GM12878 (cell line): ENCODE measurements at regions of chr7 and their contacts with region 1.

Region 1: DNA sequence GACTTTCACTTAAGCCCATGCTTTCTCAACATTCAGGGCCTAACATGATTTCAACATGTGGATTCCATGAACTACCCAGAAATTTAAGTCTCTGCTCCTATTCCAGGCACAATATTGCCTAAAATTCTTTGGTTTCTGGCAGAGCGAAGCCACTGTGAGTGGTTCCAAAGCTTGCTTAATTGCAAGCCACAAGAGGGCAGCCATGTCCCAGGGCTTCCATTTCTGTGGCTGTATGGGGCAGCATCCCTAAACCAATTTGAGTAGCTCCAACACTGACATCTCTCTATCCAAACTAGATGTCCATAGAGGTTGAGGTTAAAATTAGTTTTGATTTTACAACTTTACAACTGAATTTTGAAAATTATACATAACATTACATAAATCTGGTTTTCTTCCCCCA is 56.3 kb upstream of the MDFIC start:
- DNase-seq: peak; percentile 25
- ATAC-seq: peak; percentile 99
- H3K4me3 ChIP-seq: no peak overlapping the region
- H3K27ac ChIP-seq: no peak overlapping the region
- H3K4me1 ChIP-seq: no peaks in the 10 kb centered on the region
- H3K27me3 ChIP-seq: no peaks in the 10 kb centered on the region
- CTCF ChIP-seq: peak; percentile 78 to 88 (median 79)
- EP300 ChIP-seq: no peak
- POLR2A ChIP-seq: no peak
- RAD21 ChIP-seq: peak; percentile 98

Region 2: DNA sequence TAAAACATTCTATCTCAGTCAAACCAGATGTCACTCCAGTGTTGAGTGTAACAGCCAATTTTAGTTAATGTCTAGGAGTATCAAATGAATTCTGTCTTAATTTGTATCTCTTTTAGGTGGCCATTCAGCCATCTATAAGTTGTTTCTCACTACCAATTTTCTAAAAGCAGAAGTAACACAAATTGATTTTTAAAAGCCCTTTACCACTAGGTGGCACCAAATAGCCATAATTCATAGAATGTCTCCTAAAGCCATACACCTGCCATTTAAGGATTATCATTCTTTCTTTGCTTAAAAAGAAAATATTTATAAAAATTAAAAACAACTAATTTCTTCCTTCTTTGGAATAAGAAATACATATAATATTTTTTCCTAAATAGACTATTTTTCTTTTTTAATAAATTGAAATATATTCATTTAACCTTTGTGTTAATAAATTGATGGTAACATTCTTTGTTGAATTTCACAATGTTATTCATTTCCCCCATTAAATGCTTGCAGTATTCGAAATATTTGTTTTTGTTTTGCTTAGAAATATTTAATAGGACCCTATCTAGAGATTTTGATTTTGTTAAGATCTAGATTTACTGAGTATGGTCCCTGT is 839.0 kb before region 1 on chr7:
- CTCF ChIA-PET with region 1: interaction called, 6 read pairs
- POLR2A ChIA-PET with region 1: no interaction called
- RAD21 ChIA-PET with region 1: no interaction called
- SMC1A ChIA-PET with region 1: interaction called, 3 read pairs
- in situ Hi-C with region 1: no loop called
- intact Hi-C with region 1: loop called (anchors 10 kb)
- DNase-seq: no peak
- ATAC-seq: peak; percentile 82
- H3K4me3 ChIP-seq: no peak overlapping the region
- H3K27ac ChIP-seq: no peak overlapping the region
- H3K4me1 ChIP-seq: no peaks in the 10 kb centered on the region
- H3K27me3 ChIP-seq: no peaks in the 10 kb centered on the region; a peak in 1 of 4 replicates
- CTCF ChIP-seq: peak; percentile 31 to 74 (median 32); a peak in 4 of 6 replicates
- EP300 ChIP-seq: no peak
- POLR2A ChIP-seq: no peak
- RAD21 ChIP-seq: peak; percentile 81

Region 3: DNA sequence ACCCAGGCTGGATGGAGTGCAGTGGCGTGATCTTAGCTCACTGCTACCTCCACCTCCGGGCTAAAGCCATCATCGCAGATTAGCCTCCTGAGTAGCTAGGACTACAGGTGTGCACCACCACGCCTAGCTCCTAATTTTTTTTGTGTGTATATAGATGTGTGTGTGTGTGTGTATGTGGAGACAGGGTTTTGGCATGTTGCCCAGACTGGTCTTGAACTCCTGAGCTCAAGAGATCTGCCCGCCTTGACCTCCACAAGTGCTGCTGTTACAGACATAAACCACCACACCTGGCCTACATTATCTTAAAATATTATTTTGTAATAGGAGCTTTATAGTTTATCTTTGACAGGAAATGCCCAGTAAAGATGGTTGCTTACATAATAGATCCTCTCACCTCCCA is 426.0 kb before region 1 on chr7:
- CTCF ChIA-PET with region 1: no interaction called
- POLR2A ChIA-PET with region 1: no interaction called
- RAD21 ChIA-PET with region 1: no interaction called
- SMC1A ChIA-PET with region 1: no interaction called
- in situ Hi-C with region 1: no loop called
- intact Hi-C with region 1: no loop called
- DNase-seq: no peak
- ATAC-seq: no peak
- H3K4me3 ChIP-seq: no peak overlapping the region
- H3K27ac ChIP-seq: no peak overlapping the region
- H3K4me1 ChIP-seq: no peaks in the 10 kb centered on the region
- H3K27me3 ChIP-seq: no peaks in the 10 kb centered on the region
- CTCF ChIP-seq: no peak
- EP300 ChIP-seq: no peak
- POLR2A ChIP-seq: no peak
- RAD21 ChIP-seq: no peak

Region 4: GRCh38 chr7:114922016-114922651 is 56.6 kb after region 1 on chr7 and contains the start of gene MDFIC:
- CTCF ChIA-PET with region 1: interaction called, 24 read pairs
- POLR2A ChIA-PET with region 1: interaction called, 6 read pairs
- RAD21 ChIA-PET with region 1: interaction called, 42 read pairs
- SMC1A ChIA-PET with region 1: interaction called, 67 read pairs
- in situ Hi-C with region 1: no loop called
- intact Hi-C with region 1: loop called (anchors 2 kb)
- DNase-seq: no peak
- ATAC-seq: peak; percentile 65
- H3K4me3 ChIP-seq: peak within 1 kb of the TSS; percentile 85
- H3K27ac ChIP-seq: peak within 1 kb of the TSS; percentile 92
- H3K4me1 ChIP-seq: peaks cover 20% of the 10 kb centered on the region
- H3K27me3 ChIP-seq: no peaks in the 10 kb centered on the region
- CTCF ChIP-seq: peak in 2 of 3 experiments; percentile 6 to 8; a peak in 1 of 6 replicates
- EP300 ChIP-seq: no peak
- POLR2A ChIP-seq: peak; percentile 90
- RAD21 ChIP-seq: no peak
- polyA plus RNA-seq, gene MDFIC: 11.5 to 16.1 TPM

Region 5: DNA sequence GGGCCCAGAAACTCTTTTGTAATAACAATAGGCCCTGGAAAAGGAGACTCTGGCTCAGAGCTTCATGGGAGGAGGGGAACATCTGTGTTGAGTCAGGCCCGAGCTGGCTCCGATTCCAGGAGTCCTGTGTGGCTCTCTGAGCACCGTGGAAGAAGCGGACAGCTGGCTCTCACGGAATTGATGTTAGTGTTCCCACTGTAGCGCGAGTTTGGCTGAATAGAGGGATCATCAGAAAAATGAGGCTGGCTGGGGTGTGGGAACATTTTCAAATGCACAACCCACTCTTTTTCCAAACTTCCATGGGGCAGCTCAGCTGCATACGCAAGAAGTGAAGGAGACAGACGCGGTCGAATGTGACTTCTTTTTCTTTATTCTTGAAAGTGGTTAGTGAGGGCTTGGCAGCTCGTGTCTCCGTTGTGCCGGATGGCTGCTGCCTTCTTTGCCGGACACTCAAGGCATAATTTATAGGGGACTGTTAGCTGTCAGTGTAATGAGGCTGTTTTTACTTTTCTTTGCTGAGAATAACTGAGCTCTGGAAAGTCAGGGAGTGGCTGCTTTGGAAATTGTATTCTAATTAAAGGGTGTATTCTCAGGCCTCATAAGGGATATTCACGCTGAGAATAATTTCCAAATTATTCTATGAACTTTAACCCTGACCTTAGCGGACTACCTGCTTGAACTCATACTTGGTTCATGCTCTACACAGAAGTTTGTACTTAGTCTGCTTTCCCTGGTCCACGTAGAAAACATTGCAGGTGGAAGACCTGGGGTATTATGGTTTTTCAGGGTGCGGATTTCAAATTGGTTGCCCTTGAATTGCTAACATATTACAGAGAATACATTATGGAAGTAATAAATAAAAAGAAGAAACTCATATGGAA is 79.4 kb after region 1 on chr7:
- CTCF ChIA-PET with region 1: interaction called, 107 read pairs
- POLR2A ChIA-PET with region 1: interaction called, 3 read pairs
- RAD21 ChIA-PET with region 1: interaction called, 109 read pairs
- SMC1A ChIA-PET with region 1: interaction called, 150 read pairs
- in situ Hi-C with region 1: no loop called
- intact Hi-C with region 1: no loop called
- DNase-seq: no peak
- ATAC-seq: no peak
- H3K4me3 ChIP-seq: no peak overlapping the region
- H3K27ac ChIP-seq: no peak overlapping the region
- H3K4me1 ChIP-seq: peaks cover 29% of the 10 kb centered on the region
- H3K27me3 ChIP-seq: no peaks in the 10 kb centered on the region
- CTCF ChIP-seq: no peak
- EP300 ChIP-seq: no peak
- POLR2A ChIP-seq: no peak
- RAD21 ChIP-seq: no peak

Region 6: DNA sequence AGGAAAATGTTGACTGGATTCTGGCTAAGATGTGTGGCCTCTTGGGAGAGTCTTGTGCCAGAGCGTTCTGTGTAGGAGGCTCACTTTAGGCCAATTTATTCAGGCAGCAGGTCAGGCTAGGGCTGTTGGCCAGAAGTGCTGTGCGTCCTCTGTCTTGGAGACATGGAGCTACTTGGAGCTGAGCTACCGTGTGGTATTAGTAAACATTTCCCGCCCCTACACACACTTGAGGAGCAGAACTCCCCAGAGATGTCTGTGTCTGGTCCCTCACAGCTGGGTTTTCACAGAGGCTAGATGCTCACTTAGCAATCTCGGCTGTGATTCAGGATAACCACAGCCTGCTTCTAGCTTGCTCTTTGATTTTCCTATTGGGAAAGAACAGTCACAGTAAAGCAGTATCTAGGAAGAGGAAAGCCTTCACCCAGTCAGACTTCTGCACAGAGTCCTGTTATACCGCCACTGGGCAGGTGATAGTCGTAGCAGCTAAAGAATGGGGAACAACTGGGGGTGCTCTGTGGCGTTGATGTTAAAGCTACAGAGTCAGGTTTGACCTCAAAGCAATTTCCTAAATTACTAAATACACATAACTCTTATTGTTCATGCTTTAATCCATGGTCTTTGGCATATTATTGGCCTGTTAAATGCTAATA is 143.0 kb after region 1 on chr7:
- CTCF ChIA-PET with region 1: interaction called, 12 read pairs
- POLR2A ChIA-PET with region 1: interaction called, 3 read pairs
- RAD21 ChIA-PET with region 1: interaction called, 7 read pairs
- SMC1A ChIA-PET with region 1: interaction called, 12 read pairs
- in situ Hi-C with region 1: no loop called
- intact Hi-C with region 1: loop called (anchors 5 kb)
- DNase-seq: no peak
- ATAC-seq: peak; percentile 75
- H3K4me3 ChIP-seq: no peak overlapping the region
- H3K27ac ChIP-seq: peak overlapping the region; percentile 66
- H3K4me1 ChIP-seq: peaks cover 21% of the 10 kb centered on the region
- H3K27me3 ChIP-seq: no peaks in the 10 kb centered on the region
- CTCF ChIP-seq: no peak
- EP300 ChIP-seq: no peak
- POLR2A ChIP-seq: no peak
- RAD21 ChIP-seq: no peak

Region 7: DNA sequence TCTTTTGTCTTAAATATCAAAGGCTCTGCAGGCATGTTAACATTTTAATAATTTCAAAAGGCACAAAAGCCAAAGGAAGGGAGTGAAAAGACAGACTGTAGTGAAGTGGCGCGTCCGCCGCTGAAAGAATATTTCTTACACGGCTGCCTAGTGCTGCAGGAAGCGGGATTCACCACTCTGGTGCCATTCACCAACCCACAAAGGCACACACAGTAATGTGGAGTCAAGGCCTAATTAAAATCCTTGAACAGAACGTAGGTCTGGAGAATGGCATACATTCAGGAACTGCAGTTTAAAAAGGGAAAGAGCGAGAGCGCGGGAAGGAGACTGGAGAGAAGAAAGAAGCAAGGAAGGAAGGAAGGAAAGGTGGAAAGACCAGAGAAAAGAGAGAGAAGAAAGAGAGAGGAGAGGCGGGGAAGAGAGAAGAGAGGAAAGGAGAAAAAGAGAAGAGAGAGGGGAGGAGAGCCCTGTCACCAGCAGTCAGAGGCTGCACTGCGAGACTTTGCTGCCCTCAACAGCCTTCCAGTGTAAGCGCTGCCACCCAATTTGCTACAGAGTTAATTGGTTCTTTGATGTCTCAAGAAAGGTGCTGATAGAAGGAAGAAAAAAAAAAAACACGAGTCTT is 610.3 kb after region 1 on chr7:
- CTCF ChIA-PET with region 1: interaction called, 10 read pairs
- POLR2A ChIA-PET with region 1: no interaction called
- RAD21 ChIA-PET with region 1: interaction called, 11 read pairs
- SMC1A ChIA-PET with region 1: interaction called, 6 read pairs
- in situ Hi-C with region 1: no loop called
- intact Hi-C with region 1: loop called (anchors 1 kb)
- DNase-seq: no peak
- ATAC-seq: peak; percentile 64; the same call in 1 of the 3 replicates
- H3K4me3 ChIP-seq: no peak overlapping the region
- H3K27ac ChIP-seq: no peak overlapping the region
- H3K4me1 ChIP-seq: no peaks in the 10 kb centered on the region
- H3K27me3 ChIP-seq: peaks cover 0 to 2% of the 10 kb centered on the region in 2 experiments; a peak in 2 of 4 replicates
- CTCF ChIP-seq: peak; percentile 17 to 41 (median 28); a peak in 5 of 6 replicates
- EP300 ChIP-seq: no peak
- POLR2A ChIP-seq: no peak
- RAD21 ChIP-seq: peak; percentile 42

Region 8: GRCh38 chr7:115910541-115911164 is 1045.1 kb after region 1 on chr7:
- CTCF ChIA-PET with region 1: no interaction called
- POLR2A ChIA-PET with region 1: no interaction called
- RAD21 ChIA-PET with region 1: no interaction called
- SMC1A ChIA-PET with region 1: no interaction called
- in situ Hi-C with region 1: no loop called
- intact Hi-C with region 1: loop called (anchors 5 kb)
- DNase-seq: no peak
- ATAC-seq: peak; percentile 62
- H3K4me3 ChIP-seq: no peak overlapping the region
- H3K27ac ChIP-seq: no peak overlapping the region
- H3K4me1 ChIP-seq: no peaks in the 10 kb centered on the region
- H3K27me3 ChIP-seq: no peaks in the 10 kb centered on the region; a peak in 1 of 4 replicates
- CTCF ChIP-seq: peak; percentile 43 to 63 (median 54); a peak in 4 of 6 replicates
- EP300 ChIP-seq: no peak
- POLR2A ChIP-seq: no peak
- RAD21 ChIP-seq: peak; percentile 74